Mammary epithelial cell (primary cell): ENCODE measurements at regions of chr9 and their contacts with region 1.

Region 1: GRCh38 chr9:74577956-74578355 is 80.8 kb downstream of the RORB start:
- DNase-seq: no peak
- H3K4me3 ChIP-seq: no peak overlapping the region
- H3K27ac ChIP-seq: no peak overlapping the region
- H3K4me1 ChIP-seq: no peaks in the 10 kb centered on the region
- H3K27me3 ChIP-seq: no peaks in the 10 kb centered on the region
- CTCF ChIP-seq: peak; percentile 50 to 69

Region 2: GRCh38 chr9:74645007-74645639 is 67.2 kb after region 1 on chr9:
- CTCF ChIA-PET with region 1: no interaction called
- dilution Hi-C with region 1: no loop called
- in situ Hi-C with region 1: no loop called
- intact Hi-C with region 1: loop called (anchors 1 kb)
- DNase-seq: peak; percentile 5
- H3K4me3 ChIP-seq: no peak overlapping the region
- H3K27ac ChIP-seq: no peak overlapping the region
- H3K4me1 ChIP-seq: no peaks in the 10 kb centered on the region
- H3K27me3 ChIP-seq: no peaks in the 10 kb centered on the region
- CTCF ChIP-seq: peak; percentile 51 to 67